ENCODE measurements at regions of chr6 and their contacts with region 1.

Region 1: DNA sequence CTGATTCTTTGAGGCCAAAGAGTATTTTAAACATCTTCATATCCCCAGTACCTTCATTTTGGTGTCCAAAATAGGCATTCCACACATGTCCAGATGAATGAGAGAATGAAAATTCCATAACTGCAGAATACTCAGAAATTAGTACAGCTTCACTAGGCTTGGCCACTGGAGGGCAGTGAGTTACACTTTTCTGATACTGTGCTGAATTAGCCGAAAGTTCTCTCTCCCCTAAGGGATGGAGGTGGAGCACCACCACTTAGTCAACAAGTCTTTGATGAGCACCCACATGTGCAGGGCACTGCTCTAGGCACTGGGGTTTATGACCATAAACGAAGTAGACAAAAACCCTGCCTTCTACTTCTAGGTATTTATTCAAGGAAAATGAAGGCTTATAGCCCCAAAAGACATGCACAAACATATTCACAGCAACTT is 46.0 kb upstream of the TMEM217 start:
- DNase-seq: no peak
- H3K4me3 ChIP-seq: no peak overlapping the region
- H3K27ac ChIP-seq: no peak overlapping the region
- H3K27me3 ChIP-seq: no peaks in the 10 kb centered on the region
- CTCF ChIP-seq: peak; percentile 78

Region 2: DNA sequence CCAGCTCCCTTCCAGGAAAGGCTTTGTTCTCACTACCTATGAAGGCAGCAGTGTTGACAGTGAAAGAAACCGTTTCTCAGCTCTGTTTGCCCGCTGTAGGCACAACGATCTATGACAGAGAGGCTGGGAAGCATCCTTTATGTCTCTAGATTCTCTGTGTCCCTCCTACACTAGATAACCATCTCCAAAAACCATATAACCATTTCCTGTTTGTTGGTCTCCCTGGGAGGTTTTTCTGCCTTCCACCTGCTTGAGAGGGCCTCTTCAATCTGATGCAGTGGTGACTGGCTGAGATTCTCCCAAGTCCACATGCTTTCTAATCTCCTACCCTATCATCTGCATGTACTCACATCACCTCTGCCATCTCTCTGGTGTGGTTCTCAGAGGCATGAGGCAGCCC is 14.0 kb before region 1 on chr6:
- CTCF ChIA-PET with region 1: interaction called, 18 read pairs
- POLR2A ChIA-PET with region 1: no interaction called
- DNase-seq: no peak
- H3K4me3 ChIP-seq: no peak overlapping the region
- H3K27ac ChIP-seq: no peak overlapping the region
- H3K27me3 ChIP-seq: no peaks in the 10 kb centered on the region
- CTCF ChIP-seq: no peak

Region 3: GRCh38 chr6:37314487-37315156 is 10.7 kb after region 1 on chr6:
- CTCF ChIA-PET with region 1: interaction called, 10 read pairs
- POLR2A ChIA-PET with region 1: no interaction called
- DNase-seq: no peak
- H3K4me3 ChIP-seq: no peak overlapping the region
- H3K27ac ChIP-seq: peak overlapping the region; percentile 49
- H3K27me3 ChIP-seq: no peaks in the 10 kb centered on the region
- CTCF ChIP-seq: peak; percentile 57